Right lobe of liver (tissue), 6 donors: ENCODE measurements at regions of chr10 and their contacts with region 1.

Region 1: GRCh38 chr10:63976538-63976937 is 455.3 kb downstream of the REEP3 start:
- DNase-seq: peak in 2 of 3 donors; percentile 46 to 52
- ATAC-seq: peak; percentile 80 to 94 (median 86)
- H3K4me3 ChIP-seq: no peak overlapping the region
- H3K27ac ChIP-seq: no peak overlapping the region
- H3K4me1 ChIP-seq: no peaks in the 10 kb centered on the region
- H3K27me3 ChIP-seq: no peaks in the 10 kb centered on the region
- CTCF ChIP-seq: peak; percentile 50 to 61 (median 52)
- POLR2A ChIP-seq: no peak

Region 2: GRCh38 chr10:63878428-63878827 is 98.1 kb before region 1 on chr10:
- intact Hi-C with region 1: loop called in 1 of 2 experiments (anchors 10 kb)
- DNase-seq: no peak
- ATAC-seq: no peak
- H3K4me3 ChIP-seq: no peak overlapping the region
- H3K27ac ChIP-seq: no peak overlapping the region
- H3K4me1 ChIP-seq: no peaks in the 10 kb centered on the region
- H3K27me3 ChIP-seq: peaks cover 0 to 4% of the 10 kb centered on the region in 2 donors
- CTCF ChIP-seq: no peak
- POLR2A ChIP-seq: no peak